GM12878 (cell line): ENCODE measurements at regions of chr2 and their contacts with region 1.

Region 1: DNA sequence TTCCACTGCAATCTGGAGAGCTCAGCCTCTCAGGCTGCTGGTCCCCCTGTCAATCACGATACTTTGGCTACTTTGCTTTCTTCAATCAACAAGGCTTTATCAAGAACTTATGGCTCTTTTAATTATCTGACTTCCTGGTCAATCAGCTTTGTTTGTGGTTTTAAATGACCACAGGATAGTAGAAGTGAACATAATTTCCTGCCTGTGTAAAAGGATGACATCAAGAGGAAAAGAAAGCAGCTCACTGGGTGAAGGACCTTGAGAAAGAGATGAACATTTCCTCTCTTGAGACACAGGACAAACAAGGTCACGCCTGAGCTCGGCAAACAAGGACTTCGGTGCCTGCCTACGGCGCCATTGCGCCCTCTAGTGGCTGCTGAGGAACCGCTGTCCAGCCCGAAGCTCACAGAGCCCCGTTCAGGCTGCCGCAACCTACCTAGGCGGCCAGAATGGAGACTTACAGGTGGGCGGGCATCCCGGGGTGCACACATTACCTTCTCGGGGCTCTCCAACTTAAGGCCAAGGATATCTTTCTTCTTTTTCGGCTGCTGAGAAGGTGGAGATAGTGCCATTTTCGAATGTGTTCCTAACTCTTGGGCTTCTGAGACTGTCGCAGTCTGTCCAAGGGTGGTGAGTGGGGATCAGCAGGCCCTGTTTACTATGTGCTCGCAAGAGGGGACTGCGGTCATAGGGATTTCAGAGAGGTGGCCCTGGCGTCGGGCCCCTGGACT is 54.0 kb downstream of the IL1RL2 start:
- DNase-seq: peak; percentile 88
- ATAC-seq: peak; percentile 96
- H3K4me3 ChIP-seq: no peak overlapping the region
- H3K27ac ChIP-seq: no peak overlapping the region
- H3K4me1 ChIP-seq: peaks cover 13% of the 10 kb centered on the region; the same call in 1 of the 2 replicates
- H3K27me3 ChIP-seq: no peaks in the 10 kb centered on the region
- CTCF ChIP-seq: peak; percentile 95 to 98 (median 97); a peak in 5 of 6 replicates
- EP300 ChIP-seq: peak; percentile 64 to 69; a peak in 3 of 4 replicates
- POLR2A ChIP-seq: no peak
- RAD21 ChIP-seq: peak; percentile 90

Region 2: GRCh38 chr2:102005989-102006885 is 234.6 kb before region 1 on chr2:
- CTCF ChIA-PET with region 1: interaction called, 168 read pairs
- POLR2A ChIA-PET with region 1: interaction called, 7 read pairs
- RAD21 ChIA-PET with region 1: interaction called, 124 read pairs
- SMC1A ChIA-PET with region 1: interaction called, 119 read pairs
- in situ Hi-C with region 1: no loop called
- intact Hi-C with region 1: loop called (anchors 1 kb)
- DNase-seq: no peak
- ATAC-seq: peak; percentile 82
- H3K4me3 ChIP-seq: no peak overlapping the region
- H3K27ac ChIP-seq: no peak overlapping the region
- H3K4me1 ChIP-seq: peaks cover 3% of the 10 kb centered on the region; the same call in 1 of the 2 replicates
- H3K27me3 ChIP-seq: no peaks in the 10 kb centered on the region; a peak in 1 of 4 replicates
- CTCF ChIP-seq: peak; percentile 63 to 73 (median 69)
- EP300 ChIP-seq: no peak
- POLR2A ChIP-seq: no peak
- RAD21 ChIP-seq: peak; percentile 51

Region 3: DNA sequence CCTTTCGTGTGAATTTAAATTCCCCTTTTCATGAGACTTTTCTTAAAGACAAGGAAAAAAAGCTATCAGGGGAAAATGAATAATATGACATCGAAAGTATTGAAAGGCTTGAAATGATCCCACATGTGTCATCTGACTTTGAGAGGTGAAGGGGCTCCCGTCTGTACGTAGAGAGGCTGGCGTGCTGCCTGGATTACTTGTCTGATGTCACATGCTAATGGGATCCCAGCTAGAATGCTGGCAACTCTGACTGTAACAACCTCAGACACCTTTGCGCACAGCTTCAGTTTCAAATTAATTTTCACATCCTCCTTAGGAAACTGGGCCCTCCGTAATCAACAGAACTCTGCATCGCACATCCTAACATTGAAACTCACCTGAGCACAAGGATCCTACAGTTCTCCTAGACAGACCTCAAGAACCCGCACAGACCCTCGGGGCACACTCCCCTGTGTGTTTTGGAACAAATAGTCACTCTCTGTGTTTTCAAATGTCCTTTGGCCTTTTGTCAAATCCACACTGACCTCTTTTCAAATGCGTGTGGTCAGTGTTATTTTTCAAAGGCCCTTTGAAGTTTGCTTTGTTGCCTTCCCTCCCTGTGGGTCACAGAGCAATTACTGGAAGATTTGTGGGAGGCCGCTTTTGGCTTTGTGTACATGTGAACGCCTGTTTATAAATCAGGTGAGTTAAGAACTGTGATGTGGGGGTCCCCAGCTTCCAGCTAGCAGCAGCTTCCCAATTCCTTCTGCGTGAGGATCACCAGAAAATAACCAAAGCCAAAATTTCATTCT is 183.1 kb before region 1 on chr2:
- CTCF ChIA-PET with region 1: interaction called, 12 read pairs
- POLR2A ChIA-PET with region 1: interaction called, 4 read pairs
- RAD21 ChIA-PET with region 1: interaction called, 42 read pairs
- SMC1A ChIA-PET with region 1: interaction called, 35 read pairs
- in situ Hi-C with region 1: no loop called
- intact Hi-C with region 1: no loop called
- DNase-seq: peak; percentile 65
- ATAC-seq: peak; percentile 92
- H3K4me3 ChIP-seq: no peak overlapping the region
- H3K27ac ChIP-seq: no peak overlapping the region
- H3K4me1 ChIP-seq: no peaks in the 10 kb centered on the region
- H3K27me3 ChIP-seq: no peaks in the 10 kb centered on the region; a peak in 1 of 4 replicates
- CTCF ChIP-seq: no peak
- EP300 ChIP-seq: peak; percentile 66 to 91; a peak in 3 of 4 replicates
- POLR2A ChIP-seq: no peak
- RAD21 ChIP-seq: no peak

Region 4: DNA sequence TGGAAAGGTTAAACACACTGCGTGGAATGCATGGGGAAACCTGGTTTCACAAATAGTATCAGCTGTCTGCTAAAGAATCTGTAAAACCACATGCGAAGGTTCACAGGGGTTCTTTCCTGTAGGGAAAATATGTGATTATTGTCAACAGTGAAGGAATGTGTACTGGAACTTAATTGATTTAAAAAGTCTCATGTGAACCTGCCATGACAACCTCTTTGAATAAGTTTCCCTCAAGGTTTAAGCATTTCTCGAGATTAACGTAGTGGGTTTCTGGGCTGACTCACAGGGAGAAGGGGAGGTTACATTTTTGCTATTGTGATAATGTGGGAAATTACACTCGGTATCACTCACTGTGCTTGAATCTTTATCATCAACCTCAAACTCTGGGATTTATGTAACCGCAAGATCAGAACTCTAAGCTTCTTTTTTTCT is 126.5 kb before region 1 on chr2:
- CTCF ChIA-PET with region 1: interaction called, 11 read pairs
- POLR2A ChIA-PET with region 1: interaction called, 3 read pairs
- RAD21 ChIA-PET with region 1: interaction called, 23 read pairs
- SMC1A ChIA-PET with region 1: interaction called, 23 read pairs
- in situ Hi-C with region 1: no loop called
- intact Hi-C with region 1: no loop called
- DNase-seq: peak; percentile 33
- ATAC-seq: peak; percentile 67
- H3K4me3 ChIP-seq: no peak overlapping the region
- H3K27ac ChIP-seq: peak overlapping the region; percentile 17; the same call in 1 of the 2 replicates
- H3K4me1 ChIP-seq: peaks cover 14% of the 10 kb centered on the region
- H3K27me3 ChIP-seq: no peaks in the 10 kb centered on the region
- CTCF ChIP-seq: no peak
- EP300 ChIP-seq: no peak
- POLR2A ChIP-seq: no peak
- RAD21 ChIP-seq: no peak

Region 5: DNA sequence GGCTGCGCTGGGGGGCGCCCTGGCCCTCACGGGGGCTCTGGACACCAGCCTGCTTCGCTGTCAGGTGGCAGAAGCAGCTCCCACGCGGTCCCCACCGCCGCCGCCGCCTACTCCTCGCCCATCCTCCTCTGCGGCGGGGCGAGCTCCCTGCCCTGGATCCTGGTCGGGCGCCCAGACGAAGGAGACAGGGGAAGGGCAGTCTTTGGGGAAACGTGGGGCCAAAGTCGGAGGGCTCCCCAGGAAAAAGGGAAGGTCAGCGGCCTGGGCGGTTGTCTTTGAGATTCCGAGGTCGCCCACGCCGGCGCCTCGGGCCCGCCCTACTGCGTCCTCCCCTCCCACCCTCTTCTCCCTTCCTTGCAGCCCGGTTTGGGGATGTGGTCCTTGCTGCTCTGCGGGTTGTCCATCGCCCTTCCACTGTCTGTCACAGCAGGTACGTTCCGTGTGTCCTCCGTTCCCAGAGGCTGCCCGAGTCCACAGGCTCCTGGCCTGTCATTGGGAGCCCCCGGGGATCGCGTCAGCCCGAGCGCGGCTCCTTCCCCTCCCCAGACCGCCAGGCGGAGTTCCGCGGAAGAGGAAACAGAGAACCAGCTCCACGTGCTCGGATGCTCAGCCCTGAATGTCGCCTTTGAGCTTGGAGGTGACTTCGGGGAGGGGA is 53.2 kb before region 1 on chr2:
- CTCF ChIA-PET with region 1: interaction called, 9 read pairs
- POLR2A ChIA-PET with region 1: no interaction called
- RAD21 ChIA-PET with region 1: interaction called, 5 read pairs
- SMC1A ChIA-PET with region 1: interaction called, 10 read pairs
- in situ Hi-C with region 1: no loop called
- intact Hi-C with region 1: loop called (anchors 2 kb)
- DNase-seq: no peak
- ATAC-seq: no peak
- H3K4me3 ChIP-seq: no peak overlapping the region
- H3K27ac ChIP-seq: no peak overlapping the region
- H3K4me1 ChIP-seq: no peaks in the 10 kb centered on the region
- H3K27me3 ChIP-seq: no peaks in the 10 kb centered on the region; a peak in 2 of 4 replicates
- CTCF ChIP-seq: no peak
- EP300 ChIP-seq: no peak
- POLR2A ChIP-seq: no peak
- RAD21 ChIP-seq: no peak

Region 6: GRCh38 chr2:102355526-102356380 is 114.9 kb after region 1 on chr2 and contains the start of gene IL18R1:
- CTCF ChIA-PET with region 1: interaction called, 9 read pairs
- POLR2A ChIA-PET with region 1: no interaction called
- RAD21 ChIA-PET with region 1: interaction called, 17 read pairs
- SMC1A ChIA-PET with region 1: interaction called, 8 read pairs
- in situ Hi-C with region 1: no loop called
- intact Hi-C with region 1: no loop called
- DNase-seq: peak; percentile 42
- ATAC-seq: peak; percentile 88
- H3K4me3 ChIP-seq: peak within 1 kb of the TSS; percentile 96
- H3K27ac ChIP-seq: peak within 1 kb of the TSS; percentile 91
- H3K4me1 ChIP-seq: peaks cover 4% of the 10 kb centered on the region
- H3K27me3 ChIP-seq: no peaks in the 10 kb centered on the region
- CTCF ChIP-seq: peak; percentile 72 to 91 (median 82)
- EP300 ChIP-seq: no peak
- POLR2A ChIP-seq: no peak
- RAD21 ChIP-seq: peak; percentile 76
- polyA plus RNA-seq, gene IL18R1: 3.5 to 3.8 TPM